ENCODE measurements at regions of chr1 and their contacts with region 1.

Region 1: GRCh38 chr1:159936273-159936904 is 9.0 kb downstream of the IGSF9 start:
- DNase-seq: peak; percentile 85
- H3K4me3 Mint-ChIP-seq: no peak overlapping the region
- H3K27ac Mint-ChIP-seq: no peak overlapping the region
- H3K4me1 Mint-ChIP-seq: peaks cover 22% of the 10 kb centered on the region
- H3K27me3 Mint-ChIP-seq: no peaks in the 10 kb centered on the region
- CTCF ChIP-seq: peak; percentile 100

Region 2: DNA sequence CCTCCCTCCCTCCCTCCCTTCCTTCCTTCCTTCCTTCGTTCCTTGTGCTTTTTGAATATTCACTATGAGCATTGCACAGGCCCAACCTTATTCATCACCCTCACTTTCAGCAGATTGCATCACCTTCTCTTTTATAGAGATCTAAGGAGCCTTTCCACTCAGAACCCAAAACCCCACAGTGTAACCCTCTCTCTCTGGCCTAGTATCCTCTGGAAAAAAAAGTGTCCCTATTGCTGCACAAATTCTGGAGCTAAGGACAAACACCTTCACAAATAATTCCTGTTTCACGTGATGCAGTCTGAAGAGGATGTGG is 426.2 kb before region 1 on chr1:
- CTCF ChIA-PET with region 1: no interaction called
- POLR2A ChIA-PET with region 1: no interaction called
- intact Hi-C with region 1: no loop called
- DNase-seq: no peak
- H3K4me3 Mint-ChIP-seq: no peak overlapping the region
- H3K27ac Mint-ChIP-seq: peak overlapping the region; percentile 21
- H3K4me1 Mint-ChIP-seq: peaks cover 11% of the 10 kb centered on the region
- H3K27me3 Mint-ChIP-seq: no peaks in the 10 kb centered on the region
- CTCF ChIP-seq: no peak

Region 3: DNA sequence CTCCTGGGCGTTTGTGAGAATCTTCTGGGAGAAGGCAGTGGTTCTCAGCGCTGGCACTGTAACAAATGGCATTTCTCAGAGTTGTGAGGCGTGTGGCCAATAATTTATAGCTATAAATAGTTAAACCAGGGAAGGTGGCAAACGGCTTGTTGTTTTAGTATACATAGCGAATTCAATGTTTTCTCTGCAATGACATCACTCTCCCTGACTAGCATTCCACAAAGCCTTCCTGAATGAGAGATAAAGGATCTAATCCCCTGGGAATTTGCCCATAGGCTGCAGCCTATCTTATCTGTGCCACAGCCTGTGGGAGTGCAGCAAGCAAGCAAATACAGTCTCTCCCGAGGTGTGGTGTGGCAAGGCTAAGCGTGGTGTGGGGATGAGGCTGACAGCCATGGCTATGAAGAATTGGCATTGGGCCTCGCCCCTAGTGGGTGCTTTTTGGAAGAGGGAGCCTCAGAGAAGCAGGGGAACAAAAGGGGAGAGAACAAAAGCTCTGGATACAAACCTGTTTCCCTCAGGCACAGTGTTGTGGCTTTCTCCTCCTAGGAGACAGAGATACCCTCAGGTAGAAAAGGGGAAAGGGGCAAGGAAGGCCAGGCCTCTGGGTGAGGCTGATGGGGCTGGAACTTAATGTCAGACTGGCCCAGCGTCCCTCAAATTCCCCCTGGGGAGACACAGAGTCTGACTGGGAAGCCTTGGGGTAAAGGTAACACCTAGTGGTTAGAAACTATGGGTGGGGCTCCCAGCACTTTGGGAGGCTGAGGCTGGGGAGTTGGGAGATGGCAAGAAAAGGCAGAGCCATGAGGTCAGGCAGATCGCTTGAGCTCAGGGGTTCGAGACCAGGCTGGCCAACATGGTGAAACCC is 20.0 kb before region 1 on chr1:
- CTCF ChIA-PET with region 1: interaction called, 91 read pairs
- POLR2A ChIA-PET with region 1: no interaction called
- intact Hi-C with region 1: no loop called
- DNase-seq: peak; percentile 67
- H3K4me3 Mint-ChIP-seq: no peak overlapping the region
- H3K27ac Mint-ChIP-seq: peak overlapping the region; percentile 39
- H3K4me1 Mint-ChIP-seq: peaks cover 62% of the 10 kb centered on the region
- H3K27me3 Mint-ChIP-seq: no peaks in the 10 kb centered on the region
- CTCF ChIP-seq: no peak

Region 4: DNA sequence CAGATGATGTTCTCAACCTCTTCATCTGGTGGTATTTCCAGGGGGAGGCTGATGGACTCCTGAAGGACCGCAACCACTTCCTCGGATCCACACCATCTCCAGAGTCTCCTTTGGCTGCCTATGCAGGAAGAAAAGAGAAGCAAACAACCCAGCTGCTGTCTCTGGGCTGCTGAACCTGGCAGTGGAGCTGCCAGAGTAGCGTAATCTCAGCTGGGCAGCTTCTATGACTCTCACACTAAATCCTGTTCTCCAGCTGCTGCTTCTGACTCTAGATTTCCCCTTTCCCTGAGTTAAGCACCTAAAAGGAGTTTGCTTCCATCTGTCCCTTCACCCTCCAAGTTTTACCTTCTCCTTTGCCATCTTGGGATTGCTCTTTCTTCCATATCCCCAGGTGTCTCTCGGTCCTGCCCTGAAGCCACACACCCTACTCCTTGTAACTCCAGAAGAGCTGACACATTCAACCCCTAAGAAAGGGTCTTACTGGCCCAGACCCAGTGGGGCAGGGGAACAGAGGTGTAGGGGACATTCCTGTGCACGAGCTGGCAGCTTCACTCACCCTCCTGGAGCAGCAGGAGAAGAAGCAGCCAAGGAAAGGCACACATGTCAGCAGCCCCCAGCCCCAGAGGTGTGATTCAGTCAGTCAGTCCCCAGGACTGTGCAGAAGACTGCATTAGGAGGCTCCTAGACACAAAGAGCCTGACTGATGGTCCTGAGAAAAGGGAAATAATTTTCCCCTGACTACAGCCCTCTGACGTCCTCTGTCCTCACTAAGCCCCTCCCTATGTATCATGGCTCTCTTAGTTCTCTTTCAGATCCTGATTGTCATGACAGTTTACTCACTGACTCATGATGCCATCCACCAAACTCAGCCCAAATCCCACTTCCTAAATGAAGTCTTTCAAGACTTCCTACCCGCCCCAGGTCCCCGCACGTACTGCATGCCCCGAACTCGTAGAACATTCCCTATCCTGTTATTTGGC is 17.4 kb after region 1 on chr1 and contains the start of gene SLAMF9:
- CTCF ChIA-PET with region 1: interaction called, 23 read pairs
- POLR2A ChIA-PET with region 1: interaction called, 5 read pairs
- intact Hi-C with region 1: no loop called
- DNase-seq: peak; percentile 23
- H3K4me3 Mint-ChIP-seq: no peak within 1 kb of the TSS
- H3K27ac Mint-ChIP-seq: no peak within 1 kb of the TSS
- H3K4me1 Mint-ChIP-seq: peaks cover 25% of the 10 kb centered on the region
- H3K27me3 Mint-ChIP-seq: no peaks in the 10 kb centered on the region
- CTCF ChIP-seq: no peak
- total RNA-seq, gene SLAMF9: not detected in 2 replicates

Region 5: DNA sequence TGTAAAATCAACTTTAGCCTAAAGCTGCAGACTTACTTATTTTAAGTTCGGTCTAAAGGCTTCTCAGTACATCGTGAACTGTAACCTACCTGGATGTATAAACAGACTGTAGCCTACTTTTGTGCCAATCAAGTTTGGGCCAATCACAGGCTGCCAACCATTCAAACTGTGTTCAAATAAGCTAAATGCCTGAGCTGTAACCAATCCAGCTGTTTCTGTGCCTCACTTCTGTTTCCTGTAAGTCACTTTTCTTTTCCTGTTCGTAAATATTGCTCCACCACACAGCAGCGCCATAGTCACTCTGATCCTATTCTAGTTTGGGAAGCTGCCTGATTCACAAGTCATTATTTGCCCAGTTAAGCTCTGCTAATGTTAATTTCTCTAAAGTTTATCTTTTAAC is 55.1 kb after region 1 on chr1:
- CTCF ChIA-PET with region 1: interaction called, 25 read pairs
- POLR2A ChIA-PET with region 1: no interaction called
- intact Hi-C with region 1: no loop called
- DNase-seq: peak; percentile 7
- H3K4me3 Mint-ChIP-seq: no peak overlapping the region
- H3K27ac Mint-ChIP-seq: no peak overlapping the region
- H3K4me1 Mint-ChIP-seq: peaks cover 13% of the 10 kb centered on the region
- H3K27me3 Mint-ChIP-seq: no peaks in the 10 kb centered on the region
- CTCF ChIP-seq: no peak

Region 6: GRCh38 chr1:160046494-160047110 is 110.2 kb after region 1 on chr1:
- CTCF ChIA-PET with region 1: interaction called, 6 read pairs
- POLR2A ChIA-PET with region 1: no interaction called
- intact Hi-C with region 1: loop called (anchors 1 kb)
- DNase-seq: peak; percentile 73
- H3K4me3 Mint-ChIP-seq: no peak overlapping the region
- H3K27ac Mint-ChIP-seq: no peak overlapping the region
- H3K4me1 Mint-ChIP-seq: peaks cover 16% of the 10 kb centered on the region
- H3K27me3 Mint-ChIP-seq: peaks cover 63% of the 10 kb centered on the region
- CTCF ChIP-seq: peak; percentile 83

Region 7: GRCh38 chr1:160315359-160315758 is 379.0 kb after region 1 on chr1:
- CTCF ChIA-PET with region 1: no interaction called
- POLR2A ChIA-PET with region 1: no interaction called
- intact Hi-C with region 1: no loop called
- DNase-seq: no peak
- H3K4me3 Mint-ChIP-seq: no peak overlapping the region
- H3K27ac Mint-ChIP-seq: no peak overlapping the region
- H3K4me1 Mint-ChIP-seq: peaks cover 15% of the 10 kb centered on the region
- H3K27me3 Mint-ChIP-seq: no peaks in the 10 kb centered on the region
- CTCF ChIP-seq: no peak

Measured in MCF 10A (cell line).